Activated T-helper 1 cell treated with anti-CD3 and anti-CD28 coated beads, Interleukin-12 subunit alpha, Interleukin-12 subunit beta, Interleukin-2, Interleukin-4 antibody, amounts not matched to agents 30 ng/mL and 10 ng/mL and 1 ng/mL, durations not matched to agents 14 hours and 24 hours and 36 hours (primary cell): ENCODE measurements at regions of chr5 and their contacts with region 1.

Region 1: DNA sequence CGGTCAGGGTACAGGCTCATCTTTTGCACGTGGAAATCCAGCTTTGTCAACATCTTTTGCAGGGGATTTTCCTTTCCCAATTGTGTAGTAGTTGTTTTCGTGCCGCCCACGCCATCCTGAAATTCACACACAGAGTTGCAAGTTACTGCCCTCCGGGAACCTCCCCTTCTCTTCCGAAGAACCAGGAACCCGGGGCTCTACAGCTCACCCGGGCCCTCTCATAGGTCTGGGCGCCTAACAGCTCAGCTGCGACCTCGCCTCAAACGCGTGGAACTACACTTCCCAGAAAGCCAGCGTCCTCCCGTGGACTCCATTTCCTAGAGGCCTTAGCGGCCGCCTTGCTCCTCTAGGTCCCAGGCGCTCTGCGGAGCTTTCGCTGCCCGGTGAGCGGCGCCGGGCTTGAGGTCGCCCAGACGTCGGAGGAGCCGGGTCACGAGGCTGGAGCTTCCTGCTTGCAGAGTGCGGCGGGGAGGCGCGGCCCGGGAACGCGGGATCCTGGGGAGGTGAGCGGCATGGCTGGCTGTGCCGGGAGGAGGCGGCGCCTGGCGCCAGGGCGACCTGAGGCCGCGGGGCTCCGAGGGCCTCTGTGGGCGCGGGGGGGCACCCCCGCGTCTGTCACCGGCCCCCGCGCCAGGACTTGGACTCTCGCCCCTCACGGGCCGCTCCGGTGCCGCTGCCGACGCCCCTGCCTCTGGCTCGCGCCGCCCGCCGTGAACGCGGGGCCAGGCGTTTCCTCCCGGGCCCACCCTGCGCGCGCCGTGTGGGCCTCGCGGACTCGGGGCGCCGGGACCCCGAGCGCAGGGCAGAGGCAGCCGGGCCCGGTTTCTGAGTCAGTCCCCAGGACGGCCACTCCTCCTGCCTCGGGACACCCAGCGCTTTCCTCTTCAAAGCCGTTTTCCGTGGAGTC is at the start of gene ZNF354B:
- DNase-seq: peak; percentile 79
- H3K4me3 Mint-ChIP-seq: peak within 1 kb of the TSS; percentile 88
- H3K27ac Mint-ChIP-seq: peak within 1 kb of the TSS; percentile 75
- H3K4me1 Mint-ChIP-seq: peaks cover 25% of the 10 kb centered on the region
- H3K27me3 Mint-ChIP-seq: no peaks in the 10 kb centered on the region
- total RNA-seq, gene ZNF354B: 15.2 and 15.3 TPM in 2 replicates

Region 2: GRCh38 chr5:178396796-178397720 is 462.8 kb before region 1 on chr5:
- intact Hi-C with region 1: no loop called
- DNase-seq: no peak
- H3K4me3 Mint-ChIP-seq: no peak overlapping the region
- H3K27ac Mint-ChIP-seq: no peak overlapping the region
- H3K4me1 Mint-ChIP-seq: no peaks in the 10 kb centered on the region
- H3K27me3 Mint-ChIP-seq: no peaks in the 10 kb centered on the region

Region 3: GRCh38 chr5:178808886-178809285 is 51.0 kb before region 1 on chr5:
- intact Hi-C with region 1: no loop called
- DNase-seq: no peak
- H3K4me3 Mint-ChIP-seq: no peak overlapping the region
- H3K27ac Mint-ChIP-seq: no peak overlapping the region
- H3K4me1 Mint-ChIP-seq: no peaks in the 10 kb centered on the region
- H3K27me3 Mint-ChIP-seq: no peaks in the 10 kb centered on the region

Region 4: GRCh38 chr5:179060116-179061008 is 200.5 kb after region 1 on chr5 and contains the start of gene ZNF354C:
- intact Hi-C with region 1: loop called (anchors 1 kb)
- DNase-seq: peak; percentile 76
- H3K4me3 Mint-ChIP-seq: peak within 1 kb of the TSS; percentile 88
- H3K27ac Mint-ChIP-seq: peak within 1 kb of the TSS; percentile 61
- H3K4me1 Mint-ChIP-seq: no peaks in the 10 kb centered on the region
- H3K27me3 Mint-ChIP-seq: no peaks in the 10 kb centered on the region
- total RNA-seq, gene ZNF354C: 3.5 and 4.1 TPM in 2 replicates

Region 5: GRCh38 chr5:179142434-179143198 is 282.7 kb after region 1 on chr5:
- intact Hi-C with region 1: loop called (anchors 10 kb)
- DNase-seq: no peak
- H3K4me3 Mint-ChIP-seq: no peak overlapping the region
- H3K27ac Mint-ChIP-seq: peak overlapping the region; percentile 77
- H3K4me1 Mint-ChIP-seq: peaks cover 12% of the 10 kb centered on the region
- H3K27me3 Mint-ChIP-seq: no peaks in the 10 kb centered on the region